ENCODE measurements at regions of chr2 and their contacts with region 1.

Region 1: GRCh38 chr2:204260162-204260877 is 285.0 kb upstream of the PARD3B start:
- DNase-seq: peak; percentile 84
- ATAC-seq: peak; percentile 82
- H3K4me3 ChIP-seq: no peak overlapping the region
- H3K27ac ChIP-seq: no peak overlapping the region
- H3K4me1 ChIP-seq: peaks cover 12% of the 10 kb centered on the region
- H3K27me3 ChIP-seq: 0 out of 2 replicates have a peak, but pooled peaks cover 2% of the 10 kb centered on the region
- CTCF ChIP-seq: peak; percentile 93

Region 2: DNA sequence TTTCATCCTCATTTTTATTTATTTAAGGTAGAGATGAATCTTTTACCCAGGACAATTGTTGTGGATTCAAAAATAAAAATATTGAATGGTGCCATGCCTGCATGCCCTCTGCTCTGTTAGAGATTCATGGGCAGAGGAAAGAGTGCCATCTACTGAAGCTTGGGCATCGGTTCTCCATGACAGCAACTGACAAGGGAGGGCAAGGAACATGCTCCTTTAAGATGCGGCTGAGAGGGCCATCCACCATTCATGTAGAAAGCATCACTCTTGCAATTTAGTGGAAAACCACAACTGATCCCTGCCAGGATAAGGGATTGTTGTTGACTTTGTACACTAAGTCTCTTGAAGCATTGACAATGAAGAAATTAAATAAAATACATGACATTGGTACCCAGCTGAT is 364.8 kb after region 1 on chr2:
- CTCF ChIA-PET with region 1: no interaction called
- POLR2A ChIA-PET with region 1: no interaction called
- intact Hi-C with region 1: loop called (anchors 2 kb)
- DNase-seq: peak; percentile 65
- ATAC-seq: peak; percentile 97
- H3K4me3 ChIP-seq: no peak overlapping the region
- H3K27ac ChIP-seq: no peak overlapping the region
- H3K4me1 ChIP-seq: peaks cover 5% of the 10 kb centered on the region; the same call in 1 of the 2 replicates
- H3K27me3 ChIP-seq: no peaks in the 10 kb centered on the region
- CTCF ChIP-seq: peak; percentile 68

Region 3: GRCh38 chr2:205808486-205809121 is 1548.3 kb after region 1 on chr2:
- CTCF ChIA-PET with region 1: no interaction called
- POLR2A ChIA-PET with region 1: no interaction called
- intact Hi-C with region 1: loop called (anchors 2 kb)
- DNase-seq: no peak
- ATAC-seq: no peak
- H3K4me3 ChIP-seq: no peak overlapping the region
- H3K27ac ChIP-seq: no peak overlapping the region
- H3K4me1 ChIP-seq: no peaks in the 10 kb centered on the region
- H3K27me3 ChIP-seq: no peaks in the 10 kb centered on the region
- CTCF ChIP-seq: no peak

Region 4: DNA sequence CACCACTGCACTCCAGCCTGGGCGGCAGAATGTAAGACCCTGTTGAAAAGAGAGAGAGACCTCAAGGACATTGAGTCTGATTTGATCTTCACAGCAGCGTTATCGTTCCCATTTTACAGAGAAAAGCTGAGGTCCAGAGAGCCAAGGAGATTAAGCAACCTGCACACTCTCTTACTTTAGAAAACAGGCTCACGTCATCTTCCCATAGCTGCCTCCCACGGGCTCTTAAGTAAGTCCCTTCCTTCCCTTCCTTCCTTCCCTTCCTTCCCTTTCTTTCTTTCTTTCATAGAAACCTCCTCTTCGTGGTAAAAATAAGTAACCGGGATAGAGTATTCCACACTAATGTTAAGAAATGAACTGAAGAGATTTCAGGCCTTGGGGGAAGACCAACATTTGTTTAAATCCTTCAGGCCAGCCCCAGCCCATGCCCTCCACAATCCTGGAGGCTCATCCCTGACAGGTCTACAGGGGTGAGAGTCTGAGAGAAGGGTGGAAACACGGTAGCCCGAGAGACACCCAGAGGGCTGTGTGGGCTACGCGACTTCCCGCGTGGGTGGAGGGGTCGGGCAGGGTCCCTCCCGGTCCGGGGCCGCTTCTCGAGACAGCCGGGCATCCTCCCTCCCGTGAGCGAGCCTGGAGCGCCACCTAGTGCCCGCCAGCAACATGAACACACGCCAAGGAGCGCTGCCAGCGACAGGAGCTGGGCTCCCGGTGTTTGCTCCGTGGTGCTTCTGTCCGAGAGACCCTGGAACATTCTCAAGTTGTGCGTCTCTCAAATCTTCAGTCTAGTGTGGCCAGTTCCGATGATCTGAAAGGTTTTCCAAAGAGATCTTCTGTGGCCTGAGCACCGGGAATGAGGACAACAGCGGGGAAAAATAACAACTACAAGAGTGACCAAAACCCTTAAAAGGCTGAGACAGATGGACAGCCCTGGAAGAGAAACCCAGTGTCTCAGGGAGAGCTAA is 1665.3 kb after region 1 on chr2:
- CTCF ChIA-PET with region 1: interaction called, 10 read pairs
- POLR2A ChIA-PET with region 1: no interaction called
- intact Hi-C with region 1: no loop called
- DNase-seq: peak; percentile 75
- ATAC-seq: peak; percentile 97
- H3K4me3 ChIP-seq: peak overlapping the region; percentile 60
- H3K27ac ChIP-seq: no peak overlapping the region
- H3K4me1 ChIP-seq: 0 out of 2 replicates have a peak, but pooled peaks cover 4% of the 10 kb centered on the region
- H3K27me3 ChIP-seq: peaks cover 77% of the 10 kb centered on the region
- CTCF ChIP-seq: peak; percentile 97